ENCODE measurements at regions of chr3 and their contacts with region 1.

Region 1: DNA sequence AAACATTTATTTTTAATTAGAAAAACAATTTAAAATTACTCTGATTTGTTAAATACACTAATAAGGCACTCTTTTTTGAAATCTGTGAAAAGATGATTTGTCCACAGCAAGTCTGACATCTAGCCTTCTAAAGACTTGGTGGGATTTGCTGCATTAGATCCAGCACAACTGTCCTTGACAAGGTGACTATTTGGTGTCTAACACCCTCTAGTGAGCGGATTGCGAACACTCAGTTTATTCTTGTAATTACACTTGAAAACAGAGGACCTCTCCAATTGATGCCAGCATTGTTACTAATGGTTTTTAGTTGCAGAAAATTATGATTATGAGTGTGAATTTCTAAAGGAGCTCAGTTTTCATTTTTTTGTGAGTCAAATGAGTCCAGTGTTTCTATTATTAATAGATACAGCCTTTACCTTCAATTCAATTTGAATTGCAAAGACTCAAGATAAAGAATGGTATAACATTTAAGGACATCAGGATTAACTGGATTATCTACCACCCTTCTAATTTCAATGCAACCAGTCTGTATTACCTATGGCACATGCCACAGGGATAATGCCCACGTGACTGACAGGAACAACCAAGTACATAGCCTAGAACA is 29.7 kb upstream of the STRIT1 start:
- DNase-seq: peak; percentile 30
- ATAC-seq: peak; percentile 68
- H3K4me3 Mint-ChIP-seq: no peak overlapping the region
- H3K27ac Mint-ChIP-seq: no peak overlapping the region
- H3K4me1 Mint-ChIP-seq: no peaks in the 10 kb centered on the region
- H3K27me3 Mint-ChIP-seq: no peaks in the 10 kb centered on the region

Region 2: DNA sequence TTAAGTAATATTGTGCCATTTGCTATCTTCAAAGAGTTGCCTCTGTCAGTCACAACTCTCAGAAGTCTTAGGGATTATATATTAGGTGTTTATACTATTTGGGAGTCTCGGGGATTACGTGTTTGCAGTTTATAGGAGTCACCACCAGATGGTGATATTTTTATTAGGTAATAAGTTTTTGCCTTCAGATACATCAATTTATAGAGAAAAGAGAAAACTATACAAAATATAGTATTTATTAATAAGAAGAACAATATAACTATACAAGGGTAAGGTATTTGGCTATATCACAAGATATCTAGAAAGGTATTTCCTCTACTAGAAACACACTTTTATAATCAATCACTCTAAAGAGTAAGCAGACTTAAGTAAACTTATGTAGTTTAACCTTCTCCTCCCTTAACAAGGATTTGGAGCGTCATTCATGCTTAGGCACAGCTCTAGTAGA is 988.2 kb before region 1 on chr3:
- CTCF ChIA-PET with region 1: interaction called, 3 read pairs
- POLR2A ChIA-PET with region 1: no interaction called
- intact Hi-C with region 1: loop called (anchors 1 to 10 kb)
- DNase-seq: no peak
- ATAC-seq: no peak
- H3K4me3 Mint-ChIP-seq: no peak overlapping the region
- H3K27ac Mint-ChIP-seq: no peak overlapping the region
- H3K4me1 Mint-ChIP-seq: no peaks in the 10 kb centered on the region
- H3K27me3 Mint-ChIP-seq: peaks cover 18% of the 10 kb centered on the region

Region 3: GRCh38 chr3:154758109-154758868 is 564.9 kb before region 1 on chr3:
- CTCF ChIA-PET with region 1: no interaction called
- POLR2A ChIA-PET with region 1: no interaction called
- intact Hi-C with region 1: loop called in 1 of 2 experiments (anchors 2 kb)
- DNase-seq: no peak
- ATAC-seq: no peak
- H3K4me3 Mint-ChIP-seq: no peak overlapping the region
- H3K27ac Mint-ChIP-seq: no peak overlapping the region
- H3K4me1 Mint-ChIP-seq: no peaks in the 10 kb centered on the region
- H3K27me3 Mint-ChIP-seq: no peaks in the 10 kb centered on the region

Region 4: DNA sequence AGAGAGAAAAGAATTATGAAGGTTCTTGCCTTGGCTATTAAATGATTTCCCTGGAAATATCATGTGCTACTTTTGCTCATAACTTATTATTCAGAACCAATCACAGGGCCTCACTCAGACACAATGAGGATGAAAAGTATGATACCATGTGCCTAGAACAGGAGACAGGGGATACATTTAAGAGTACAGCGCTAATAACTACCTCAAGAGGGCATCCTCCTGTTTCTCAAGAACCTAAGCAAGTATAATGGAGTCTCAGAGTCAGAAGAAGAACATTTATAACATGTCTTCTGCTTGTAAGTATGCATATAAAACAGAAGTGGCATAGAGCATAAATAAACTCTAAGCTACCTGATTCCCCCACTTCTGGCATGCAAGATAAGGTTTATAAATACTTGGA is 368.4 kb before region 1 on chr3:
- CTCF ChIA-PET with region 1: no interaction called
- POLR2A ChIA-PET with region 1: no interaction called
- intact Hi-C with region 1: loop called in 1 of 2 experiments (anchors 5 kb)
- DNase-seq: no peak
- ATAC-seq: no peak
- H3K4me3 Mint-ChIP-seq: no peak overlapping the region
- H3K27ac Mint-ChIP-seq: no peak overlapping the region
- H3K4me1 Mint-ChIP-seq: no peaks in the 10 kb centered on the region
- H3K27me3 Mint-ChIP-seq: no peaks in the 10 kb centered on the region